Prostate gland (tissue), 2 donors: ENCODE measurements at regions of chr3 and their contacts with region 1.

Region 1: GRCh38 chr3:142447852-142448823 is at the start of gene XRN1:
- DNase-seq: peak; percentile 92
- H3K4me3 ChIP-seq: peak within 1 kb of the TSS; percentile 85 to 93
- H3K27ac ChIP-seq: peak within 1 kb of the TSS; percentile 96 to 98
- H3K4me1 ChIP-seq: peaks cover 6% of the 10 kb centered on the region
- H3K27me3 ChIP-seq: no peaks in the 10 kb centered on the region
- CTCF ChIP-seq: peak in 2 of 4 experiments; percentile 12 to 23
- POLR2A ChIP-seq: peak; percentile 75
- total RNA-seq, gene XRN1: 32.1 to 33.3 TPM

Region 2: DNA sequence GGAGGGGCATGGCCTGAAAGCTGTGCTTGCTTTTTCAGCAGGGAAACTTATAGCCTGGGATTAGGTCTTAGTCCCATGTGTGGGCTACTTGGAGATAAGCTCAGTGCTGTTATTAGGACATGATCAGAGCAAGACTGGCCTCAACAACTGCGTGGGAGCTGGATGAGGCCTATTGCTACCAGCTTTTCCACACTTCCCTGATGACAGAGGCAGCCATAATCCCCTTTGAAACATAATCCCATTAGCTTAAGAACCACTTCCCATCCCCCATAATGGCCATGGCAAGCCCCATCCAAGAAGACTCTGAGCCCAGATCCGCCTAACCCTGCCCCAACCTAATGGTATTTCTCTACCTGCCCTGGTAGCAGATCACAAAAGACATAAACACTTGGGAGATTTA is 196.2 kb before region 1 on chr3:
- intact Hi-C with region 1: no loop called
- DNase-seq: no peak
- H3K4me3 ChIP-seq: no peak overlapping the region
- H3K27ac ChIP-seq: no peak overlapping the region
- H3K4me1 ChIP-seq: no peaks in the 10 kb centered on the region
- H3K27me3 ChIP-seq: no peaks in the 10 kb centered on the region
- CTCF ChIP-seq: no peak
- POLR2A ChIP-seq: no peak

Region 3: GRCh38 chr3:142578327-142579223 is 130.4 kb after region 1 on chr3 and contains the start of gene ATR:
- intact Hi-C with region 1: loop called (anchors 2 kb)
- DNase-seq: peak; percentile 96
- H3K4me3 ChIP-seq: peak within 1 kb of the TSS; percentile 71 to 82
- H3K27ac ChIP-seq: peak within 1 kb of the TSS; percentile 88 to 95
- H3K4me1 ChIP-seq: no peaks in the 10 kb centered on the region
- H3K27me3 ChIP-seq: no peaks in the 10 kb centered on the region
- CTCF ChIP-seq: peak in 2 of 4 experiments; percentile 27 to 28
- POLR2A ChIP-seq: peak; percentile 75
- total RNA-seq, gene ATR: 35.6 to 36.1 TPM

Region 4: DNA sequence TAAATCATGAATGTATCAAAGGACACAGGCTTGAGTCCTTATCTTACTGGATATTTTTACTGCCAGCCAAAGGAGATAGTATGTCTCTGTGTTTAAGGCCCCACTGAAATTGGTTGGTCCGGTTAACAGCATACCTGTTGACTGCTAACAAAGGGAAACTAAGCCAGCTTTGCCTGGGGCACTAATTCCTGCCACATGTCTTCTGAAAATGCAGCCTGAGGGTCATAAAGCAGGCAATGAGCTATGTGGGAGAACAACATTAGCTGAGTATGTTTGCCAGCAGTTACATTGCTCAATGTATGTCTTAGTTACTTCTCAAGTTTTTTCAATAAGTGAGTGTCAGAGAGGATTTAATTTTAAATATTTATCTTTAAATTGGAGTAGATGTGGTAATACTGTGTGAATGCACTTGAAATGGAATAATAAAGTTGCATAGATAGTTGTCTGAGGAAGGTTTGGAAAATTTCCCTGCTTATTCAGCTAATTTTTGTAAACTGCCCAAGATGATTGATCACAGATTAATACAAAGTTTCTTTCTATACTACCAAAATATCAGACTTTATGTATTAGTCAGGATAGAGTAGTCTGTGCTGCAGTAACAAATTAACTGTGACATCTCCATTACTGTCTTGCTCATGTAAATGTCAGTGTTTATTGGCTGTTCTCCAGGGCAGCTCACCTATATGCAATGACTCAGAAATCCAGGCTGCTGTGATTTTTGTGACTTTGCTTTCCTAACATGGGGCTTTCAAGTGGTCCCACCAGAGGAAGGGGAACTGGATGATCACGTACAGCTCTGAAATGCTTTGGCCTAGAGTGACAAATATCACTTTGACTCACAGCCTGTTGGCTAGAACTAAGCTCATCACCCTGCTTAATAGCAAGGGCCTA is 160.8 kb after region 1 on chr3:
- intact Hi-C with region 1: no loop called
- DNase-seq: no peak
- H3K4me3 ChIP-seq: no peak overlapping the region
- H3K27ac ChIP-seq: no peak overlapping the region
- H3K4me1 ChIP-seq: no peaks in the 10 kb centered on the region
- H3K27me3 ChIP-seq: no peaks in the 10 kb centered on the region
- CTCF ChIP-seq: no peak
- POLR2A ChIP-seq: no peak

Region 5: DNA sequence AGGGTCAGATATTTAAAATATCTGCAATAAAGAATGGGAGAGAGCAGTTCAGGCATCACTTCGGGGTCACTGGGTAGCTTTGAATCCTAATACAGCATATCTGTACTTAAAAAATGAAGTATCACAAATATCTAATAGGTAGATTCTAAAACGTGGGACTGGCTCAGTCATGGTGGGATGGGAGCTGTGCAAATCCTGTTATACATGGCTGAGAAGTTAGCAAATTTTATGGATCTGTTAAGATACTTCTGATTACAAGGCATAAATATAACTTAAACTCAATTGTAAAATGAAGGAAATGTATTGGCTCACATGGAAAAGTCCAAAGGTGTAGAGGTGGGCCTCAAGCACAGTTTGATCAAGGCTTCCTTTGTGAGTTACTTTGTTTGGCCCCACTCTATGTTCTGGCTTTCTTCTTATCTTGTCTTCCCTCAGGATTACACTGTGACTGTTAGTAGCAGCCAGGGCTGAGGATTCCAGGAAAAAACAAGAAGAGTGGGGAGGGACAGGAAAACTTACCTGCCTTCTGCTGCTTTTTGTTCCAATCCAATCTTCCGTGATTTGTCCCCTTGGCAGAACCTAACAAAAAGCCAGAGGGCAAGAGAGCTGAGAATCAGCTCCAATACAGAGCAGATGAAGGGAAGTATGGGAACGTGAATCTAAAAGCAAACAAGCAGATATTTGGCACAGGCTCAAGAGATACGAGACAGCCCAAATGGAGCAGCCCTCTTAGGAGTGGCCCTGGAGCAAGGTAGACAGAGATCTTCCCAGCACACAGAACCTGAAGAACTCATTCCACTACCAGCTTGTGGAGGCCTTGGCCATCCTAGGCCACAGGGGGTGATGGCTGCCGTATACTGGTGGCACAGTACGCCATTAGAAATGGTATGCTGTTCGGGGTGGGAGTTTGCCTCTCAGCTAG is 504.4 kb after region 1 on chr3:
- intact Hi-C with region 1: no loop called
- DNase-seq: no peak
- H3K4me3 ChIP-seq: no peak overlapping the region
- H3K27ac ChIP-seq: no peak overlapping the region
- H3K4me1 ChIP-seq: no peaks in the 10 kb centered on the region
- H3K27me3 ChIP-seq: peaks cover under 1% of the 10 kb centered on the region
- CTCF ChIP-seq: no peak
- POLR2A ChIP-seq: no peak